Right ventricle myocardium inferior (tissue), 1 donor: ENCODE measurements at regions of chr16 and their contacts with region 1.

Region 1: GRCh38 chr16:74709441-74709877 is 8.8 kb upstream of the MLKL start:
- DNase-seq: peak; percentile 79
- ATAC-seq: peak; percentile 83

Region 2: DNA sequence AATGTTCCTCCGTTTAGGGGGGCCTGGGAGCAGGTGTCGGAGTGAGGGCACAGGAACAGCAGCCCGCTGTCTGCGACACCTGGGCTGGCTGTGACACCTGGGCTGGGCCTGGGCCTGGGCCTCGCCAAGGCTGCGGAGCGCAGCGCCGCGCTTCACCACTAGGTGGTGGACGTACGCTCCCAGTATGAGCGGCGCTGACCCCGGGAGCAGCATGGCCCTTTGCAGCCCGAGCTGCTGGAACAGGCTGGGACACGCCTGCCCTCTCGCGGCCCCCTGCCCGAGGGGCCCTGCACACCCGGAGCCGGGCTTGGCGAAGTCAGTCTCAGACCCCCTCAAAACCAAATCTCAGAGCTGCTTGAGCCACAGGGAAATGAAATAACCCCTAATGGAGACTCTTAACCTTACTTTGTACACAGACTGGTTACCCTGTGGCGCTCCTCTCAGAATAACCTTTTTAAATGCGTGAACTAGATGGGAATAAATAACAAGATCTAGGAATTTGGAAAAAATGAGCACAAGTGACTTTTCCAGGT is 103.7 kb after region 1 on chr16:
- intact Hi-C with region 1: loop called (anchors 5 kb)
- DNase-seq: peak; percentile 81
- ATAC-seq: peak; percentile 92

Region 3: GRCh38 chr16:74825941-74826542 is 116.6 kb after region 1 on chr16:
- intact Hi-C with region 1: no loop called
- DNase-seq: no peak
- ATAC-seq: no peak

Region 4: DNA sequence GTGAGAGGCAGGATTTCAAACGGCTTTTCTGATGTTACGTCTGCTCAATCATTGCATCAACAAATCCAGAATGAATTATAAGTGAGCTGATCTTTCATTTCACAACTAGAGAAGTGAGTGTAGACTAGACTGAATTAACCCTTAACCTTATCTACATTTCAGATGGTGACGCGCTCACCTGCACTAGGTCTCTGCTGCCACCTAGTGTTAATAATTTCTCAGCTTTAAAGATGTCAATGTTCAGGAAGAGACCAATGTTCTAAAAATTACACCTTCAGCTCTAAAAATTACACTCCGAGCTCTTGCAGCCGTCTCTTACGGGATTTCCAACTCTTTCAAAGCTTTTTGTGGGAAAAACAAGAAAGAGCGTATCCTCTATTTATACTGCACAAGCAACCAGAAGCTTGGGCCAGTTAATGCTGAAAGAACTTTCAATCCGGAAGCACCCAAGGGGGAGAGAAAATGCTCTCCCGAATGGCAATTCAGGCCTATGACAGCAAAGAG is 153.3 kb after region 1 on chr16:
- intact Hi-C with region 1: loop called (anchors 2 kb)
- DNase-seq: no peak
- ATAC-seq: no peak